Activated CD4-positive, alpha-beta T cell treated with anti-CD3 and anti-CD28 coated beads for 36 hours (primary cell): ENCODE measurements at regions of chr4 and their contacts with region 1.

Region 1: DNA sequence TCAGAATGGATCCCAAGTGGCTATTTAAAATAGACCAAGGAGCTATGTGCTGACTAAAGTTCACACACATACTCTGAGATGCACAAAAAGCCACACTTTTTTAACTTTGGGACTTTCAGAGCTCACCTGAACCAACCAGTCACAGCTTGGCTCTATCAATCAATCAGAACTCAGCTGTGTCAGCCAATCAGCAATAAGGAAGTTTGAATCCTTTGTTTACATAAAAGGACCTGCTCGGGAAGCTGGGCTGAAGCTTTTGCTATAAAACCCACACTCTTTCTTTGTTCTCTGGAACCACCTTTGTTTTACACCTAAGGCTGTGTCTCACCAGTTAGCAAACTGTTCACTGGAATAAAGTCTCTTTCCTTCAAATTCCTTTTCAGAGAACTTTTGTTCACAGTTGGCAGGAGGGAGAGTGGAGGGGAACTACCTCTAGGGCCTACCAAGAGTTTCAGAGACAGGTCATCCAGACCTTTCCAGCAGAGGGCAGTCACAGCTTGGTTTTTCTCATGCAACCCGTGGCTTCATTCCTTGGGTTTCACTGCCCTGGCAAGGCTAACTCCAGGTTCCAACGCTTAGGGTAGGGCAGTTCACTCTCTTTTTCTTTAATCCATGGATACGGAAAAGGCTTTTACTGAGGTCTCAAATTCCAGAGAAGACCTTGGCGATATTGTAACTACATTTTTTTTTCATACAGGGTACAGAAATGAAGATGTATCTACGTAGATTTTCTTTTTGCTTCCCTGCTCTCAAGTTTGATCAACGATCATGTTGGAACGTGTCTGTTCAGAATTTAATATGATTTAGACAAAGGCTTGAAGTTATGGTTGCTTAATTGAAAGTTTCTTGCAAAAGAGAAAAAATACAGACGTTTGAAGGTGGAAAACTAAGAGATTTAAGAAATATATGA is 80.7 kb downstream of the GPRIN3 start:
- DNase-seq: peak; percentile 85
- ATAC-seq: peak; percentile 85
- H3K4me3 Mint-ChIP-seq: no peak overlapping the region
- H3K27ac Mint-ChIP-seq: no peak overlapping the region
- H3K4me1 Mint-ChIP-seq: peaks cover 15% of the 10 kb centered on the region
- H3K27me3 Mint-ChIP-seq: no peaks in the 10 kb centered on the region

Region 2: GRCh38 chr4:89248879-89249281 is 22.0 kb after region 1 on chr4:
- CTCF ChIA-PET with region 1: interaction called, 19 read pairs
- POLR2A ChIA-PET with region 1: no interaction called
- intact Hi-C with region 1: no loop called
- DNase-seq: no peak
- ATAC-seq: no peak
- H3K4me3 Mint-ChIP-seq: no peak overlapping the region
- H3K27ac Mint-ChIP-seq: no peak overlapping the region
- H3K4me1 Mint-ChIP-seq: peaks cover 47% of the 10 kb centered on the region
- H3K27me3 Mint-ChIP-seq: no peaks in the 10 kb centered on the region

Region 3: DNA sequence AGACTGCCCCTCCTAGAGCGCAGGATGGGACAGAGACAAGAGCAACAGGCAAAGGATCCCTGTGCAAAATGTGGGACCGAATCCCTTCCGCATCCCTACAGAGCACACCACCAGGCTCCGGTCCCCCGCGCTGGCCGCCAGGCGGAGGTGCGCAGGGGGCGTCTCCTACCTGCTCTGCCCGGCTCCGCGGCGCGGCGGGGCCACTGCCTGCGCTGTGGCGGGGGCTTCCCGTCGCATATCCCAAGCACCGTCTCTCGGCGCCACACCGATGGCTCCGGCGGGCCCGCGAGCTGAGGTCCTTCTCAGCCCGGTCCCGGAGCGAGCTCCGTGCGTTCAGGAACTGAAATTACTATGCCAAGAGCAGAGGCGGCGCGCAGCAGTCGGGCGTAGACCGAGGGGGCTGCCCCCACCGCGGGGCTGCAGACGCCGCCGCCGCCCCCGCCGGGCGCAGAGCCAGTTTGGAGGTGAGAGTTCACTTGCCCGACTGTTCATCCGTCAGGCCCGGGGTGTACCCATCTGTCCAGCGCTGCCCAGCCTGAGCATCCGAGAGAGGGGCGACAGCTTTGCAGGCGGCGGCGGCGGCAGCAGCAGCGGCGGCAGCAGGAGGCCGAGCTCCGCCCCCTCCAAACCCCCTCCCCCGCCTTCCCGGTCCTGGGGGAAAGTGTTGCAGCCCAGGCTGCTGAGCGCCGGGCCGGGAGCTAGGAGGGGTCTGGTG is 80.7 kb after region 1 on chr4 and contains the start of gene GPRIN3:
- CTCF ChIA-PET with region 1: interaction called, 10 read pairs
- POLR2A ChIA-PET with region 1: no interaction called
- intact Hi-C with region 1: no loop called
- DNase-seq: peak; percentile 84
- ATAC-seq: peak; percentile 70
- H3K4me3 Mint-ChIP-seq: peak within 1 kb of the TSS; percentile 77
- H3K27ac Mint-ChIP-seq: peak within 1 kb of the TSS; percentile 93
- H3K4me1 Mint-ChIP-seq: peaks cover 59% of the 10 kb centered on the region
- H3K27me3 Mint-ChIP-seq: no peaks in the 10 kb centered on the region
- total RNA-seq, gene GPRIN3: 10.5 to 12.2 TPM

Region 4: DNA sequence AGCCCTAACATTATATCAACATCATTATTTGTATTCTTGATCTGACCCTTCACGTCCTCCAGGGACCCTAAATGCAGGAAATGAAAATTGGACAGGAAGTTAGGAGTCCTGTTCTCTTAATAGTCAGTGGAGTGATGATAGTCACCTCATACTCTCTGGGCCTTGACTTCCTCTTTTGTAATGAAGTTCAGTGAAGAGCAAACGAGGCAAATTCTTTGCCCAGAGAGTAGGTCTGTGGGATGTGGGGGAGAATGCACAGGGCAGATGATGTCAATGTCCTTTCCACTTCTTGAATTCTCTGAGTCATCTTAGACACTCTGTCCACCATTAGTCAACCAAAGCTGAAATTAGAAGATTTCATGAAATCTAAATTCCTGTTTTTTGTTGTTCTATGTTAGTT is 97.8 kb after region 1 on chr4:
- CTCF ChIA-PET with region 1: no interaction called
- POLR2A ChIA-PET with region 1: no interaction called
- intact Hi-C with region 1: no loop called
- DNase-seq: no peak
- ATAC-seq: peak; percentile 78
- H3K4me3 Mint-ChIP-seq: no peak overlapping the region
- H3K27ac Mint-ChIP-seq: no peak overlapping the region
- H3K4me1 Mint-ChIP-seq: peaks cover 10% of the 10 kb centered on the region
- H3K27me3 Mint-ChIP-seq: no peaks in the 10 kb centered on the region

Region 5: DNA sequence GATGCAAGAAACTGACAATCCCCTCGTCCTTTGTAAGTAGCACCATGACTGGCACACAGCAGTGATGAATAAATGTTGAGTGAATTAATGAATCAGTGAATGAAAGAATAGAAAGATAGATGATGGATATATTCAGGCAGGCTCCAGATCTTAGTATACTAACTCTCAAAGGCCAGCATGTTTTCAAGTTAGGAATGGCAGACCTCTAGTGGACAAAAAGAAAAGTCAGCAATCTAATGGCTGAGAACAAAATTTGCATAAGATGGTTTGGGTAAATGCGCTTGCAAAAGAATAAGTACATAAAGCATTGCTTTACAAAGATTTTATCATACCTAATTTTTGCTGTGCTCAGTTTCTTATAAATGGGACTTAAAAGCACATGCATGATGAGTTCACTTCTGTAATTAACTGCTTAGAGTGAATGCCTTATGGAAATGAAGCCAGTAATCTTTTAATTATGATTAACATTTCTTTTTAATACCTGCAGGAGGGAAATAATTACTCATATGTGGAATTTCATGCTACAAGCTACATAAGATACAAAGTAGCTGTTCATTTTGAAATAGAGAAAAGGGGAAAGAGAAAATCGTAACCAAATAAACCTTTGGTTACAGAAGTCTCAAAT is 207.6 kb after region 1 on chr4:
- CTCF ChIA-PET with region 1: interaction called, 73 read pairs
- POLR2A ChIA-PET with region 1: no interaction called
- intact Hi-C with region 1: loop called (anchors 1 kb)
- DNase-seq: no peak
- ATAC-seq: peak; percentile 75
- H3K4me3 Mint-ChIP-seq: no peak overlapping the region
- H3K27ac Mint-ChIP-seq: no peak overlapping the region
- H3K4me1 Mint-ChIP-seq: peaks cover 21% of the 10 kb centered on the region
- H3K27me3 Mint-ChIP-seq: peaks cover 2% of the 10 kb centered on the region